ENCODE measurements at regions of chr2 and their contacts with region 1.

Region 1: DNA sequence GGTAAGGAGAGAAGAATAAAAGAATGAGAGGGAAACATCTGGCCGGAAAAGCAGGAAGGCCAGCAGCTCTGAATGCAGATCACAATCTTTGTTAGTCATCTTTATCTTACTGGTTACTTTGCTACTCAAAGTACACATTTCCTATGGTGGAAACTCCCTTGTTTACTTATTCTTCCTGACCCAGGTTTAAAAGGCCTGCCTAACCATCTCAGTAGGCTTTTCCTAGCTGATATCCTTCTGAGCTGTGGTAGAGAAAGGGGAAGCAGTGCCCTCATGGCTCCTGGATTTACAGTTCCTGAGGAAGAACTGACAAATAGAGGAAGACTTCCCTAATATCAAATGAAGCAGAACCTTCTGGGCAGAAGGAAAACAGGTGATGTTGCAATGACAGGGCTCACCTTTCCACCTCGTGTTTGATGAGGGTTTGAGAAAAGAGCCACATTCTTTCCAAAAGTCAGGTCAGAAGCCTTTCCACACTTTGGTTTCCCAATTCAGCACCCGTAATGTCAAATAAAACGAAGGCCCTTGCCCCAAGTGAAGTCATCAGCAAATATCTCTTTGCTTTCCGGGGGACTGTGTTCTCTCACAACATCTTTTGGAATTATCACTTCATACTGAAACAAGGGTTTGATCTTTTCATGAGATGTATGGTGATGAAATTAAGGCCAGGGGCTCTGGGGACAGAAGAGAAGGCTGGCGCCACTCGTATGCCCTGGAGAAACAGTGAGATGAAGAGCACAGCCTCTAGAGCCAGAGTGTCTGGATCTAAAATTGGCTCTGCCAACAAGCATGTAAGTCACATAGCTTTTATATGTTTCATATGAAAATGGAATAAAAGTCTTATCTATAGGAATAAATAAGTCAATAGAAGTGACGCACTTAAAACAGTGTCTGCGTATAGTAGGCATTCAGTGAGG is 26.7 kb upstream of the APOB start:
- DNase-seq: no peak
- ATAC-seq: no peak
- H3K4me3 ChIP-seq: no peak overlapping the region
- H3K27ac ChIP-seq: no peak overlapping the region
- H3K4me1 ChIP-seq: no peaks in the 10 kb centered on the region
- H3K27me3 ChIP-seq: no peaks in the 10 kb centered on the region
- CTCF ChIP-seq: no peak
- POLR2A ChIP-seq: no peak

Region 2: GRCh38 chr2:22454826-22455485 is 1384.4 kb after region 1 on chr2:
- intact Hi-C with region 1: loop called in 1 of 10 experiments (anchors 5 kb)
- DNase-seq: no peak
- ATAC-seq: no peak
- H3K4me3 ChIP-seq: no peak overlapping the region
- H3K27ac ChIP-seq: no peak overlapping the region
- H3K4me1 ChIP-seq: no peaks in the 10 kb centered on the region
- H3K27me3 ChIP-seq: no peaks in the 10 kb centered on the region
- CTCF ChIP-seq: no peak
- POLR2A ChIP-seq: no peak